IMR-90 (cell line): ENCODE measurements at regions of chr9 and their contacts with region 1.

Region 1: GRCh38 chr9:92384375-92384774 is 20.0 kb downstream of the OGN start:
- DNase-seq: peak; percentile 69
- ATAC-seq: peak; percentile 87
- H3K4me3 ChIP-seq: no peak overlapping the region
- H3K27ac ChIP-seq: no peak overlapping the region
- H3K4me1 ChIP-seq: no peaks in the 10 kb centered on the region; the same call in 1 of the 2 replicates
- H3K27me3 ChIP-seq: no peaks in the 10 kb centered on the region
- CTCF ChIP-seq: no peak
- POLR2A ChIP-seq: no peak
- RAD21 ChIP-seq: no peak

Region 2: GRCh38 chr9:91643481-91644077 is 740.8 kb before region 1 on chr9:
- CTCF ChIA-PET with region 1: no interaction called
- POLR2A ChIA-PET with region 1: no interaction called
- dilution Hi-C with region 1: no loop called
- in situ Hi-C with region 1: no loop called
- intact Hi-C with region 1: no loop called
- DNase-seq: peak; percentile 46
- ATAC-seq: peak; percentile 27; the same call in 1 of the 2 replicates
- H3K4me3 ChIP-seq: no peak overlapping the region
- H3K27ac ChIP-seq: no peak overlapping the region
- H3K4me1 ChIP-seq: peaks cover 2% of the 10 kb centered on the region; the same call in 1 of the 2 replicates
- H3K27me3 ChIP-seq: peaks cover 4% of the 10 kb centered on the region
- CTCF ChIP-seq: no peak
- POLR2A ChIP-seq: no peak
- RAD21 ChIP-seq: no peak

Region 3: GRCh38 chr9:92349771-92350739 is 34.3 kb before region 1 on chr9:
- CTCF ChIA-PET with region 1: no interaction called
- POLR2A ChIA-PET with region 1: no interaction called
- dilution Hi-C with region 1: no loop called
- in situ Hi-C with region 1: no loop called
- intact Hi-C with region 1: loop called (anchors 5 kb)
- DNase-seq: peak; percentile 74
- ATAC-seq: peak; percentile 54
- H3K4me3 ChIP-seq: no peak overlapping the region
- H3K27ac ChIP-seq: peak overlapping the region; percentile 50; the same call in 1 of the 2 replicates
- H3K4me1 ChIP-seq: 0 out of 2 replicates have a peak, but pooled peaks cover 2% of the 10 kb centered on the region
- H3K27me3 ChIP-seq: no peaks in the 10 kb centered on the region
- CTCF ChIP-seq: no peak
- POLR2A ChIP-seq: no peak
- RAD21 ChIP-seq: no peak